ENCODE measurements at regions of chr1 and their contacts with region 1.

Region 1: GRCh38 chr1:66725885-66726665 is 26.2 kb upstream of the DYNLT5 start:
- DNase-seq: peak; percentile 82
- H3K4me3 ChIP-seq: no peak overlapping the region
- H3K27ac ChIP-seq: no peak overlapping the region
- H3K4me1 ChIP-seq: peaks cover 31% of the 10 kb centered on the region
- H3K27me3 ChIP-seq: no peaks in the 10 kb centered on the region
- CTCF ChIP-seq: peak; percentile 83 to 84
- POLR2A ChIP-seq: no peak

Region 2: DNA sequence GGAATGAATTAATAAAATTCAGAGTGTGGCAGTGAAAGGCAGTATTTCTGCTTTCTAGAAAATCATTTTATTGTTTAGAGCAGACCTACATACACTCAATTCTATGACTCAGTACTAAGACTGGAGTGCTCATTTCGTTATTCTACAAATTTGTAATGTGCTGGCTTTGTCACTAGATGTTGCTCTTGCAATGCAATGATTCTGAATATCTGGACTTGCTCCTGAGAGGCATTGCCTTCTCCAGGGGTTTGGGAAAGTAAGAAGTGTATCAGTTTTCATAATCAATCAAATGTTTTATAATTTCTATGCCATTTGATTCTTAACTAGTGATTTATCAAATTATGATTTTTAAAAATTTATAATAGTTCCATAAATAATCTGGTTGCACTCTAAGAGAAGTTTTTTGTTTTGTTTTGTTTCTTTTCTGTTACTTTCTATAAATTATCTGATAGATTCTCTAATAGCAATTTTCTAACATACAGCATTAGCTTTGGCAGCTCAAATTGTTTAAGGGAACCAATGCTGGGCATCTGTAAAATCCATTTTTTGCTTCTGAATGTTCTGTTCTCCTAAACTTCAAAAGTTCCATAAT is 472.6 kb before region 1 on chr1:
- CTCF ChIA-PET with region 1: interaction called, 3 read pairs
- POLR2A ChIA-PET with region 1: no interaction called
- dilution Hi-C with region 1: no loop called
- intact Hi-C with region 1: loop called (anchors 1 kb)
- DNase-seq: peak; percentile 89
- H3K4me3 ChIP-seq: no peak overlapping the region
- H3K27ac ChIP-seq: no peak overlapping the region
- H3K4me1 ChIP-seq: peaks cover 6% of the 10 kb centered on the region
- H3K27me3 ChIP-seq: no peaks in the 10 kb centered on the region
- CTCF ChIP-seq: peak; percentile 60
- POLR2A ChIP-seq: no peak

Region 3: DNA sequence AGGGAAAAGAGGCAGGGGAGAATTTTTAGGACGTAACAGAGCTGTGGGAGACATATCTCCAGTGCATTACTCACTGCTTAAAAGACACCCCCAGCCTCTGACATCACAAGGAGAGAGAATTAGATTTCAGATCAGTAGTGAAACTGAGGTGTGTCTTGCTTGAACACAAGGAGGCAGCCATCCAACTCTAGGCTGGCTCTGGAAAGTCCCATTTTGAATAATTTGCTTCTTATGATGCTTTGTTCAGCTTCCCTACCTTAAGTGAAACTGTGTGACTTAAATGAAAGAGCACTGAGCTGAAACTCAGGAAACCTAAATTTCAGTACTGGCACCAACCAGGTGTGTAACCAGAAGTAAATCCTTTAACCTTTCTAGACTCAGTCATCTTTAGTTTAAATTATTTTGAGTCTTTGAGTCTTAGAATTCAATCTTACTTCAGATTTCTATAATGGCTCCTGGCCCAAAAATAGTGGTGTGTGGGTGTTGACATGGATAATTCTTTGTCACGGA is 443.7 kb before region 1 on chr1:
- CTCF ChIA-PET with region 1: no interaction called
- POLR2A ChIA-PET with region 1: no interaction called
- dilution Hi-C with region 1: no loop called
- intact Hi-C with region 1: no loop called
- DNase-seq: peak; percentile 53
- H3K4me3 ChIP-seq: no peak overlapping the region
- H3K27ac ChIP-seq: no peak overlapping the region
- H3K4me1 ChIP-seq: peaks cover 3% of the 10 kb centered on the region
- H3K27me3 ChIP-seq: no peaks in the 10 kb centered on the region
- CTCF ChIP-seq: peak in 1 of 2 donors; percentile 3
- POLR2A ChIP-seq: no peak

Region 4: GRCh38 chr1:66350001-66350547 is 376.0 kb before region 1 on chr1:
- CTCF ChIA-PET with region 1: no interaction called
- POLR2A ChIA-PET with region 1: no interaction called
- dilution Hi-C with region 1: no loop called
- intact Hi-C with region 1: loop called (anchors 2 kb)
- DNase-seq: peak; percentile 93
- H3K4me3 ChIP-seq: peak overlapping the region in 1 of 3 experiments; percentile 3
- H3K27ac ChIP-seq: peak overlapping the region; percentile 96
- H3K4me1 ChIP-seq: peaks cover 100% of the 10 kb centered on the region
- H3K27me3 ChIP-seq: no peaks in the 10 kb centered on the region
- CTCF ChIP-seq: no peak
- POLR2A ChIP-seq: peak; percentile 14

Region 5: DNA sequence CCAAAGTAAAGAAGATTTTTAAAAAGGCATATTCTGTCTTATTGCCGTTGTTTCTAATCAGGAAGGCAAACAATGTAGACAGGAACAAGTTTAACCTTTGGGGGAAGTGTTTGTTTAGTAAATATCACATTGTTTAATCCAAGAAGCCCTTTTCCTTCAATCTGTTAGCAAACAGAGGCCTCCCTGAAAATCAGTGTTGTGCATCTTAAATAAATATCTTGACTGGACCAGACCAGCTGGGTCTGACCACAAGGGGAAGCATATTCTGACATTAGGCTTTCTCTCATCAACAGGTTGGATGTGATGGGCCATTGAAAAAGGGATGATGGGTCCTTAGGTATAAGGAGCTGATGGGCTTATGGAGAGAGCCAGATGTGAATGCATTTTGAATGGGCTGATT is 273.9 kb before region 1 on chr1:
- CTCF ChIA-PET with region 1: interaction called, 39 read pairs
- POLR2A ChIA-PET with region 1: no interaction called
- dilution Hi-C with region 1: no loop called
- intact Hi-C with region 1: loop called (anchors 1 kb)
- DNase-seq: peak; percentile 33
- H3K4me3 ChIP-seq: no peak overlapping the region
- H3K27ac ChIP-seq: no peak overlapping the region
- H3K4me1 ChIP-seq: no peaks in the 10 kb centered on the region
- H3K27me3 ChIP-seq: no peaks in the 10 kb centered on the region
- CTCF ChIP-seq: peak; percentile 22 to 25
- POLR2A ChIP-seq: no peak

Region 6: GRCh38 chr1:66533804-66534740 is 192.0 kb before region 1 on chr1 and contains the start of gene SGIP1:
- CTCF ChIA-PET with region 1: interaction called, 9 read pairs
- POLR2A ChIA-PET with region 1: no interaction called
- dilution Hi-C with region 1: no loop called
- intact Hi-C with region 1: loop called (anchors 2 kb)
- DNase-seq: peak; percentile 88
- H3K4me3 ChIP-seq: peak within 1 kb of the TSS; percentile 41 to 66 (median 47)
- H3K27ac ChIP-seq: peak within 1 kb of the TSS; percentile 75
- H3K4me1 ChIP-seq: peaks cover 29% of the 10 kb centered on the region
- H3K27me3 ChIP-seq: no peaks in the 10 kb centered on the region
- CTCF ChIP-seq: no peak
- POLR2A ChIP-seq: no peak
- total RNA-seq, gene SGIP1: 51.0 and 68.9 TPM in 2 replicates

Region 7: DNA sequence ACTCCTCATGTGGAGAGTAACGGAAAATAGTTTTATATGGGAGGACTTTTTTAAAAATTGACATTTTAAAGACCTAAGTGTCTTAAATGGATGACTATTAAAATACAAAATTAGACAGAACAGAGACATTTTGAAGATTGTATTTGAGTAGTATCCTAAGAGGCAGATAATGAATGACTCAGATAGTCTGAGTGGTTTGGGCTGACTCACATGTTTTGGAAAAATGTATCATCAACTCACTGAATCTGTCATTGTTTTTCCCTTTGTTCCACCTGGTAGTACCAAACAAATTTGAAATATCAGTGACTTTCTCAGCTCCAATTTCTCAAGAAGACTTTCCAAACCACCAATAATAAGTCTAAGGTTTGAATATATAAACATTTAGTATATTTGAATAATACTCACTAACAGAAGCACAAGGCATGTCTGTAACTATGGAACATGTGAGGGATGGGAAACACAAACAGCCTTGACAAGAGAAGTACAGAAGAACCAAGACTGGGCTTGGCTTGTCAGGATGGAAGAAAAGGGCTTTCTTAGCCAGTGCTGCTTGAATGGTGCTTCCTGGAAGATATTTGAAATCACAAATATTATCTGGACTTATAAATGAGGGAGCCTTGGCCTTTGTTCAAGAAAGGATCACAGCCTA is 101.5 kb before region 1 on chr1:
- CTCF ChIA-PET with region 1: interaction called, 5 read pairs
- POLR2A ChIA-PET with region 1: no interaction called
- dilution Hi-C with region 1: no loop called
- intact Hi-C with region 1: loop called (anchors 5 kb)
- DNase-seq: peak; percentile 74
- H3K4me3 ChIP-seq: peak overlapping the region in 1 of 3 experiments; percentile 15
- H3K27ac ChIP-seq: peak overlapping the region; percentile 85
- H3K4me1 ChIP-seq: peaks cover 23% of the 10 kb centered on the region
- H3K27me3 ChIP-seq: no peaks in the 10 kb centered on the region
- CTCF ChIP-seq: no peak
- POLR2A ChIP-seq: no peak

Region 8: GRCh38 chr1:66924756-66925557 is 198.9 kb after region 1 on chr1 and contains the starts of genes DNAI4 and MIER1:
- CTCF ChIA-PET with region 1: no interaction called
- POLR2A ChIA-PET with region 1: no interaction called
- dilution Hi-C with region 1: no loop called
- intact Hi-C with region 1: loop called (anchors 1 kb)
- DNase-seq: peak; percentile 99
- H3K4me3 ChIP-seq: peak within 1 kb of the TSS; percentile 70 to 90 (median 82)
- H3K27ac ChIP-seq: peak within 1 kb of the TSS; percentile 95
- H3K4me1 ChIP-seq: peaks cover 30% of the 10 kb centered on the region
- H3K27me3 ChIP-seq: no peaks in the 10 kb centered on the region
- CTCF ChIP-seq: peak in 1 of 2 donors; percentile 15
- POLR2A ChIP-seq: peak; percentile 95
- total RNA-seq, gene DNAI4: 3.3 and 4.8 TPM in 2 replicates
- total RNA-seq, gene MIER1: 36.8 and 38.5 TPM in 2 replicates

Region 9: GRCh38 chr1:66954208-66954607 is 228.1 kb after region 1 on chr1:
- CTCF ChIA-PET with region 1: no interaction called
- POLR2A ChIA-PET with region 1: no interaction called
- dilution Hi-C with region 1: no loop called
- intact Hi-C with region 1: no loop called
- DNase-seq: no peak
- H3K4me3 ChIP-seq: no peak overlapping the region
- H3K27ac ChIP-seq: peak overlapping the region; percentile 27
- H3K4me1 ChIP-seq: peaks cover 12% of the 10 kb centered on the region
- H3K27me3 ChIP-seq: no peaks in the 10 kb centered on the region
- CTCF ChIP-seq: no peak
- POLR2A ChIP-seq: no peak